Naive thymus-derived CD4-positive, alpha-beta T cell (primary cell): ENCODE measurements at regions of chr18 and their contacts with region 1.

Region 1: DNA sequence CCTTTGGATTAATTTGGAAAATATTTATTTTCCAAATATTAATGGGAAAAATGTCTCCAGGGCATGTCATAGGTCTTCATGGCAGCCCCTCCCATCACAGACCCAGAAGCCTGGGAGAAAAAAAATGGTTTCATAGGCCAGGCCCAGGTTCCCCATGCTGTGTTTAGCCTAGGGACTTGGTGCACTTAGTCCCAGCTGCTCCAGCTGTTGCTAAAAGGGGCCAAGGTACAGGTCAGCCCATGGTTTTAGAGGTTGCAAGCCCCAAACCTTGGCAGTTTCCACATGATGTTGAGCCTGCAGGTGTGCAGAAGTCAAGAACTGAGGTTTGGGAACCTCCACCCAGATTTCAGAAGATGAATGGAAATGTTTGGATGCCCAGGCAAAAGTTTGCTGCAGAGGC is 309.6 kb downstream of the SOCS6 start:
- DNase-seq: no peak
- ATAC-seq: no peak
- H3K4me3 ChIP-seq: no peak overlapping the region
- H3K4me3 Mint-ChIP-seq: no peak overlapping the region
- H3K27ac ChIP-seq: no peak overlapping the region
- H3K27ac Mint-ChIP-seq: peak overlapping the region in 6 of 9 donors; percentile 56 to 92 (median 84)
- H3K4me1 ChIP-seq: peaks cover 0 to 5% of the 10 kb centered on the region in 2 donors
- H3K4me1 Mint-ChIP-seq: peaks cover 0 to 33% (median 17%) of the 10 kb centered on the region in 7 donors
- H3K27me3 ChIP-seq: no peaks in the 10 kb centered on the region
- H3K27me3 Mint-ChIP-seq: no peaks in the 10 kb centered on the region

Region 2: GRCh38 chr18:70559446-70559845 is 39.0 kb before region 1 on chr18:
- CTCF ChIA-PET with region 1: no interaction called
- POLR2A ChIA-PET with region 1: no interaction called
- intact Hi-C with region 1: no loop called
- DNase-seq: no peak
- ATAC-seq: no peak
- H3K4me3 ChIP-seq: no peak overlapping the region
- H3K4me3 Mint-ChIP-seq: no peak overlapping the region
- H3K27ac ChIP-seq: no peak overlapping the region
- H3K27ac Mint-ChIP-seq: no peak overlapping the region
- H3K4me1 ChIP-seq: peaks cover 0 to 7% of the 10 kb centered on the region in 2 donors
- H3K4me1 Mint-ChIP-seq: peaks cover 0 to 18% (median 5%) of the 10 kb centered on the region in 7 donors
- H3K27me3 ChIP-seq: no peaks in the 10 kb centered on the region
- H3K27me3 Mint-ChIP-seq: no peaks in the 10 kb centered on the region

Region 3: GRCh38 chr18:70621710-70622109 is 23.3 kb after region 1 on chr18:
- CTCF ChIA-PET with region 1: interaction called, 12 read pairs
- POLR2A ChIA-PET with region 1: interaction called, 24 read pairs
- intact Hi-C with region 1: loop called in 1 of 2 experiments (anchors 2 kb)
- DNase-seq: peak in 7 of 9 donors; percentile 19 to 53 (median 47)
- ATAC-seq: peak; percentile 79
- H3K4me3 ChIP-seq: peak overlapping the region; percentile 45
- H3K4me3 Mint-ChIP-seq: peak overlapping the region; percentile 82 to 93 (median 87)
- H3K27ac ChIP-seq: peak overlapping the region; percentile 77
- H3K27ac Mint-ChIP-seq: peak overlapping the region; percentile 84 to 100 (median 98)
- H3K4me1 ChIP-seq: peaks cover 0 to 71% of the 10 kb centered on the region in 2 donors
- H3K4me1 Mint-ChIP-seq: peaks cover 19 to 85% (median 72%) of the 10 kb centered on the region in 7 donors
- H3K27me3 ChIP-seq: no peaks in the 10 kb centered on the region
- H3K27me3 Mint-ChIP-seq: no peaks in the 10 kb centered on the region

Region 4: DNA sequence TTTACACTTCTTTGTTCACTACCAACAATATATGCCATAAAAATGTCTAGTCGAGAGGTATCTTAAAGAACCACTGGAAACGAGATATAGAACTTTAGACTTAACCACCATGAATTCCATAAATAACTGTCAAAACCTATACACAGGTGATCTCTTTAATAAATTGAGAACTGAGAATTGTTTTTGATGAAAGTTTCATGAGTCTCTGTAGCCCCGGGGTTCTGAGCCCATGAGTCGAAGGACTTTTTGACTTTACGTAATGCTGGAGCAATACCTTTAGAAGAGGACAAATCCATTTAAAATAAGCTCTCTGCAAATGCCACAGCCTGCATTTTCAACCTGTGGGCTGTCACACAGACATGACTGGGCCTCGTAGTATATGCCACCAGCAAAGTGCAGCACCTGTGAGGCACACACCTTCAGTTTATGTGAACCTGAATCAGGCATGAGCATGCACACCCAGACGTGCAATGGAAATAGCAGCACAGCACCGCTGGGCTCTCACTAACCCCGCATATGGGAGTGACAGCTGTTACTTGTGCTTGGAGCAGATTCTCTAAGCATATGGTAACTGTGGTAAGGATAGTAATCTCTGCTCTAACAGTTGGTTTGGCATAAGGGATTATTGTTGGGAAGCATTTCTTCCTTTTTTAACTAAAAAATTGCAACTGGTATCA is 73.6 kb after region 1 on chr18:
- CTCF ChIA-PET with region 1: no interaction called
- POLR2A ChIA-PET with region 1: interaction called, 4 read pairs
- intact Hi-C with region 1: loop called in 1 of 2 experiments (anchors 1 kb)
- DNase-seq: peak in 2 of 9 donors; percentile 49 to 58
- ATAC-seq: peak; percentile 50
- H3K4me3 ChIP-seq: no peak overlapping the region
- H3K4me3 Mint-ChIP-seq: peak overlapping the region in 8 of 10 donors; percentile 1 to 66 (median 37)
- H3K27ac ChIP-seq: peak overlapping the region; percentile 74
- H3K27ac Mint-ChIP-seq: peak overlapping the region in 8 of 9 donors; percentile 89 to 98 (median 94)
- H3K4me1 ChIP-seq: peaks cover 3 to 52% of the 10 kb centered on the region in 2 donors
- H3K4me1 Mint-ChIP-seq: peaks cover 11 to 68% (median 59%) of the 10 kb centered on the region in 7 donors
- H3K27me3 ChIP-seq: no peaks in the 10 kb centered on the region
- H3K27me3 Mint-ChIP-seq: no peaks in the 10 kb centered on the region

Region 5: GRCh38 chr18:70781860-70782453 is 183.6 kb after region 1 on chr18:
- CTCF ChIA-PET with region 1: no interaction called
- POLR2A ChIA-PET with region 1: no interaction called
- intact Hi-C with region 1: loop called in 1 of 2 experiments (anchors 1 kb)
- DNase-seq: peak; percentile 21 to 76 (median 72)
- ATAC-seq: peak; percentile 96
- H3K4me3 ChIP-seq: no peak overlapping the region
- H3K4me3 Mint-ChIP-seq: peak overlapping the region in 5 of 10 donors; percentile 2 to 60 (median 10)
- H3K27ac ChIP-seq: no peak overlapping the region
- H3K27ac Mint-ChIP-seq: peak overlapping the region in 3 of 9 donors; percentile 22 to 80 (median 77)
- H3K4me1 ChIP-seq: peaks cover 0 to 6% of the 10 kb centered on the region in 2 donors
- H3K4me1 Mint-ChIP-seq: peaks cover 0 to 24% (median 23%) of the 10 kb centered on the region in 7 donors
- H3K27me3 ChIP-seq: no peaks in the 10 kb centered on the region
- H3K27me3 Mint-ChIP-seq: no peaks in the 10 kb centered on the region

Region 6: GRCh38 chr18:70931942-70932814 is 333.8 kb after region 1 on chr18:
- CTCF ChIA-PET with region 1: no interaction called
- POLR2A ChIA-PET with region 1: no interaction called
- intact Hi-C with region 1: loop called in 1 of 2 experiments (anchors 1 kb)
- DNase-seq: peak in 5 of 9 donors; percentile 4 to 32 (median 19)
- ATAC-seq: no peak
- H3K4me3 ChIP-seq: no peak overlapping the region
- H3K4me3 Mint-ChIP-seq: no peak overlapping the region
- H3K27ac ChIP-seq: no peak overlapping the region
- H3K27ac Mint-ChIP-seq: peak overlapping the region in 3 of 9 donors; percentile 4 to 59 (median 16)
- H3K4me1 ChIP-seq: peaks cover 0 to 6% of the 10 kb centered on the region in 2 donors
- H3K4me1 Mint-ChIP-seq: peaks cover 0 to 10% (median 8%) of the 10 kb centered on the region in 7 donors
- H3K27me3 ChIP-seq: no peaks in the 10 kb centered on the region
- H3K27me3 Mint-ChIP-seq: no peaks in the 10 kb centered on the region

Region 7: DNA sequence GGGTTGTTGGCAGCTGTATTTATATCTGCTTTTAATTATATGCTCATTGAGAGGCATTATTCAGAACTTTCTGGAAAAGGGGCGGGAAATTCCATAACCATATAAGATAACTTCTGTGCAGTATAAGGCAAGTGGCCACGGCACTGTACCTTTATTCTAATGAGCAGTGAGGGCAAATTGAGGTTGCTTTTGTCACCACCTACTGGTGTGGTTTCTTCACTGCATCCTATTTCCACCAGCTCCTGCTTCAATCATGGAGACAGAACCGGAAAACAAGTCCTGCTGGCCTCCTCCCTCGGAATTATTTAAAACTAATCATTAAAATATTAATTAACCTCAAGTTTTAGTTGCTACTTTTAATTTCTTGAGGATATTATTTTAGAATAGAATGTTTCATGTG is 1186.4 kb after region 1 on chr18:
- CTCF ChIA-PET with region 1: no interaction called
- POLR2A ChIA-PET with region 1: no interaction called
- intact Hi-C with region 1: loop called in 1 of 2 experiments (anchors 10 kb)
- DNase-seq: peak in 3 of 9 donors; percentile 0 to 5 (median 0)
- ATAC-seq: no peak
- H3K4me3 ChIP-seq: no peak overlapping the region
- H3K4me3 Mint-ChIP-seq: no peak overlapping the region
- H3K27ac ChIP-seq: no peak overlapping the region
- H3K27ac Mint-ChIP-seq: no peak overlapping the region
- H3K4me1 ChIP-seq: no peaks in the 10 kb centered on the region
- H3K4me1 Mint-ChIP-seq: no peaks in the 10 kb centered on the region
- H3K27me3 ChIP-seq: no peaks in the 10 kb centered on the region
- H3K27me3 Mint-ChIP-seq: no peaks in the 10 kb centered on the region